ENCODE measurements at regions of chr7 and their contacts with region 1.

Region 1: GRCh38 chr7:5494683-5495561 is 71.3 kb upstream of the TNRC18 start:
- DNase-seq: peak; percentile 76
- H3K4me3 ChIP-seq: peak overlapping the region in 2 of 3 experiments; percentile 15 to 23
- H3K27ac ChIP-seq: peak overlapping the region; percentile 16
- H3K4me1 ChIP-seq: peaks cover 21% of the 10 kb centered on the region
- H3K27me3 ChIP-seq: no peaks in the 10 kb centered on the region
- CTCF ChIP-seq: peak; percentile 91 to 96

Region 2: GRCh38 chr7:5382281-5382892 is 112.5 kb before region 1 on chr7:
- CTCF ChIA-PET with region 1: no interaction called
- dilution Hi-C with region 1: loop called (anchors 5 kb)
- in situ Hi-C with region 1: no loop called
- intact Hi-C with region 1: no loop called
- DNase-seq: no peak
- H3K4me3 ChIP-seq: no peak overlapping the region
- H3K27ac ChIP-seq: no peak overlapping the region
- H3K4me1 ChIP-seq: no peaks in the 10 kb centered on the region
- H3K27me3 ChIP-seq: no peaks in the 10 kb centered on the region
- CTCF ChIP-seq: no peak

Region 3: DNA sequence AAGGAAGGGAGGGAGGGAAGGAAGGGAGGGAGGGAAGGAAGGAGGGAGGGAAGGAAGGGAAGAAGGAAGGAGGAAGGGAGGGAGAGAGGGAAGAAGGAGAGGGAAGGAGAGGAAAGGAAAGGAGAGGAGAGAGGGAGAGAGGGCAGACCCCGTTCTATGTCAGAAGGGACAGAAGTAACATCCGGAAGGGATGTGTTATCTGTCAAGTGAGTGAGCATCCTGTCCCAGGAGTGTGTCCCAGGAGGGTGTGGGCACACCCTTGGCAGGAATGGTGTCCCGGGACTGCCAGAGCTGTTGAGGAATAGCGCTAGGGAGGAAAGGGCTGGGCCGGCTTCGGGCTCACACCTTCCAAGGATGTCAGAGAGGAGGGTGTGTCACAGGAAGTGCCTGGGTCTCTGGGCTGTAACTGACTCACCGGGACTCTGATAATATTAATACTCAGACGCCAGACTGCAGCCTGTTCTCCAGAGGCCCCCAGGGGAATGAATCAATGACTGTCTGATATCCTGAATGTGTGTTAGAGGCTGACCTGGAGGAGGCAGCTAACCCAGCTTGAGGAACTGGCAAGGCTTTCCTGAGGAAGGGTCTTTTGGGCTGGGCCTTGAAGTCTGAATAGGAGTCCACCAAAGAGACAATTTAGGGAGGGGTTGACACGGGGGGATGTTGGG is 54.3 kb after region 1 on chr7:
- CTCF ChIA-PET with region 1: no interaction called
- dilution Hi-C with region 1: no loop called
- in situ Hi-C with region 1: loop called in 1 of 2 experiments (anchors 5 kb)
- intact Hi-C with region 1: no loop called
- DNase-seq: peak; percentile 93
- H3K4me3 ChIP-seq: no peak overlapping the region
- H3K27ac ChIP-seq: peak overlapping the region; percentile 76
- H3K4me1 ChIP-seq: peaks cover 12% of the 10 kb centered on the region
- H3K27me3 ChIP-seq: no peaks in the 10 kb centered on the region
- CTCF ChIP-seq: peak in 1 of 2 donors; percentile 19

Region 4: GRCh38 chr7:5596046-5596895 is 101.3 kb after region 1 on chr7:
- CTCF ChIA-PET with region 1: no interaction called
- dilution Hi-C with region 1: loop called (anchors 5 kb)
- in situ Hi-C with region 1: no loop called
- intact Hi-C with region 1: no loop called
- DNase-seq: peak; percentile 90
- H3K4me3 ChIP-seq: peak overlapping the region; percentile 68 to 90 (median 88)
- H3K27ac ChIP-seq: peak overlapping the region; percentile 58
- H3K4me1 ChIP-seq: peaks cover 46% of the 10 kb centered on the region
- H3K27me3 ChIP-seq: no peaks in the 10 kb centered on the region
- CTCF ChIP-seq: no peak

Region 5: GRCh38 chr7:5677538-5678294 is 182.8 kb after region 1 on chr7:
- CTCF ChIA-PET with region 1: no interaction called
- dilution Hi-C with region 1: loop called (anchors 5 kb)
- in situ Hi-C with region 1: no loop called
- intact Hi-C with region 1: loop called (anchors 1 kb)
- DNase-seq: peak; percentile 63
- H3K4me3 ChIP-seq: no peak overlapping the region
- H3K27ac ChIP-seq: peak overlapping the region; percentile 30
- H3K4me1 ChIP-seq: peaks cover 11% of the 10 kb centered on the region
- H3K27me3 ChIP-seq: no peaks in the 10 kb centered on the region
- CTCF ChIP-seq: peak; percentile 75

Measured in mammary epithelial cell (primary cell).